ENCODE measurements at regions of chr12 and their contacts with region 1.

Region 1: GRCh38 chr12:55619354-55620138 is 17.1 kb upstream of the OR10P1 start:
- DNase-seq: peak in 1 of 2 donors; percentile 39
- H3K4me3 ChIP-seq: no peak overlapping the region
- H3K27ac ChIP-seq: no peak overlapping the region
- H3K4me1 ChIP-seq: no peaks in the 10 kb centered on the region
- H3K27me3 ChIP-seq: no peaks in the 10 kb centered on the region
- CTCF ChIP-seq: peak; percentile 65 to 82 (median 74)
- POLR2A ChIP-seq: no peak

Region 2: GRCh38 chr12:55194382-55194781 is 425.2 kb before region 1 on chr12:
- intact Hi-C with region 1: loop called (anchors 10 kb)
- DNase-seq: no peak
- H3K4me3 ChIP-seq: no peak overlapping the region
- H3K27ac ChIP-seq: no peak overlapping the region
- H3K4me1 ChIP-seq: no peaks in the 10 kb centered on the region
- H3K27me3 ChIP-seq: no peaks in the 10 kb centered on the region
- CTCF ChIP-seq: no peak
- POLR2A ChIP-seq: no peak